Ovary (tissue), 10 donors: ENCODE measurements at regions of chr16 and their contacts with region 1.

Region 1: DNA sequence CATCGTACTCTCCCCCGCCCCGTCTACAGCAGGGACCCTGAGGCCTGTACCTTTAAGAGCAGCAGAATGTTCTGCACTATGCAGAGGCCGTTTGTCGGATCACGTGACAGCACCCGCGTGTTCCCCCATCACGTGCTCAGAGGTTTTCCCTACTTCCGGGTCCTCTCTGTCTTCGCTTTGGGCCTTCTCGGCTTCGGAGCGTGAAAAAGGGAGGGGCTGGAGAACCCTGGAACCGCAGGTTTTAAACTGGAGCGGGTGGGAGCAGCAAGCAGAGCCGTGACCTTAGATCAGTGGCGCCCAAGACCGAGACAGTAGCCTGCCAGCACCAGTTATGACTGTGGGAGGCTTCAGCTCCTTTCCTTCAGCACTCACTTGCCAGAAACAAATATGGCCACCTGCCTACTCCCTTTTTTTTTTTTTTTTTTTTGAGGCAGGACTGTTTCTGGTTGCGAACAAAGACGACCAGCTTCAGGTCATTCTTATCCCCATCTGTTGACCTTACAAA is at the start of gene CLN3:
- DNase-seq: peak; percentile 89 to 92 (median 91)
- H3K4me3 ChIP-seq: peak within 1 kb of the TSS; percentile 99
- H3K27ac ChIP-seq: peak within 1 kb of the TSS; percentile 45 to 87
- H3K4me1 ChIP-seq: peaks cover 2% of the 10 kb centered on the region
- H3K27me3 ChIP-seq: no peaks in the 10 kb centered on the region
- CTCF ChIP-seq: no peak
- EP300 ChIP-seq: no peak
- POLR2A ChIP-seq: no peak
- total RNA-seq, gene CLN3: 17.8 to 30.9 (median 22.4) TPM

Region 2: GRCh38 chr16:28538733-28539596 is 46.9 kb after region 1 on chr16 and contains the start of gene NUPR1:
- intact Hi-C with region 1: loop called in 3 of 4 experiments (anchors 5 to 10 kb)
- DNase-seq: peak; percentile 96 to 99 (median 98)
- H3K4me3 ChIP-seq: peak within 1 kb of the TSS; percentile 42
- H3K27ac ChIP-seq: peak within 1 kb of the TSS; percentile 91 to 96
- H3K4me1 ChIP-seq: peaks cover 18% of the 10 kb centered on the region
- H3K27me3 ChIP-seq: no peaks in the 10 kb centered on the region
- CTCF ChIP-seq: no peak
- EP300 ChIP-seq: no peak
- POLR2A ChIP-seq: peak; percentile 88
- total RNA-seq, gene NUPR1: 25.5 to 355 (median 129) TPM

Region 3: GRCh38 chr16:28549390-28549789 is 57.4 kb after region 1 on chr16:
- intact Hi-C with region 1: loop called in 2 of 4 experiments (anchors 10 kb)
- DNase-seq: no peak
- H3K4me3 ChIP-seq: no peak overlapping the region
- H3K27ac ChIP-seq: no peak overlapping the region
- H3K4me1 ChIP-seq: no peaks in the 10 kb centered on the region
- H3K27me3 ChIP-seq: no peaks in the 10 kb centered on the region
- CTCF ChIP-seq: peak in 2 of 3 donors; percentile 46 to 48
- EP300 ChIP-seq: no peak
- POLR2A ChIP-seq: no peak